ENCODE measurements at regions of chr5 and their contacts with region 1.

Region 1: GRCh38 chr5:55936100-55936693 is 58.6 kb downstream of the IL6ST start:
- DNase-seq: peak; percentile 90
- ATAC-seq: peak; percentile 88
- H3K4me3 Mint-ChIP-seq: no peak overlapping the region
- H3K27ac Mint-ChIP-seq: no peak overlapping the region
- H3K4me1 Mint-ChIP-seq: peaks cover 2% of the 10 kb centered on the region
- H3K27me3 Mint-ChIP-seq: no peaks in the 10 kb centered on the region

Region 2: DNA sequence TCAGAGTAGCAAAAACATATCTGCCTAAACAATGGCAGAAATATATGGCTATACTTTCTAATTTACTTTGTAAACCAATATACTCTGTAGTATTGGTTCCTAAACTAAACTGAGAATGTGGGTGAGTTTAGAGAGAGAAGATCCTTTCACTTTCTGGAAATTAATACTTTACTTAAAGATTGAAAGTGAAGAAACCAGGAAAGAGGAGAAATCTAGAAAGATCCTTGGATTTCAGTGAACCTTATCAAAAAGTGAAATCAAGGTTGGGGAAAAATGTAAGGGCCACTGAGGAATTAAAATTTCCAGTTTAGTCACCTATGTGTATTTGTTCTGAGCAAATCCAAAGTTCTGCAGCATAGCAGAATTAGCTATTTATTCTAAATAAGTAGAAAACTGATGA is 230.0 kb before region 1 on chr5:
- CTCF ChIA-PET with region 1: no interaction called
- POLR2A ChIA-PET with region 1: no interaction called
- DNase-seq: no peak
- ATAC-seq: no peak
- H3K4me3 Mint-ChIP-seq: no peak overlapping the region
- H3K27ac Mint-ChIP-seq: no peak overlapping the region
- H3K4me1 Mint-ChIP-seq: peaks cover 14% of the 10 kb centered on the region
- H3K27me3 Mint-ChIP-seq: no peaks in the 10 kb centered on the region

Region 3: GRCh38 chr5:55923177-55923771 is 12.9 kb before region 1 on chr5:
- CTCF ChIA-PET with region 1: interaction called, 15 read pairs
- POLR2A ChIA-PET with region 1: interaction called, 4 read pairs
- DNase-seq: peak; percentile 49
- ATAC-seq: peak; percentile 59
- H3K4me3 Mint-ChIP-seq: peak overlapping the region; percentile 84
- H3K27ac Mint-ChIP-seq: peak overlapping the region; percentile 80
- H3K4me1 Mint-ChIP-seq: peaks cover 39% of the 10 kb centered on the region
- H3K27me3 Mint-ChIP-seq: no peaks in the 10 kb centered on the region

Region 4: GRCh38 chr5:56200856-56201666 is 264.9 kb after region 1 on chr5:
- CTCF ChIA-PET with region 1: interaction called, 86 read pairs
- POLR2A ChIA-PET with region 1: interaction called, 3 read pairs
- DNase-seq: peak; percentile 72
- ATAC-seq: peak; percentile 93
- H3K4me3 Mint-ChIP-seq: no peak overlapping the region
- H3K27ac Mint-ChIP-seq: no peak overlapping the region
- H3K4me1 Mint-ChIP-seq: peaks cover 1% of the 10 kb centered on the region
- H3K27me3 Mint-ChIP-seq: no peaks in the 10 kb centered on the region

Measured in activated CD8-positive, alpha-beta T cell treated with anti-CD3 and anti-CD28 coated beads, Interleukin-2, amount 10 ng/mL, durations not matched to agents 7 days and 5 days (primary cell).